Endothelial cell of umbilical vein (primary cell): ENCODE measurements at regions of chr3 and their contacts with region 1.

Region 1: DNA sequence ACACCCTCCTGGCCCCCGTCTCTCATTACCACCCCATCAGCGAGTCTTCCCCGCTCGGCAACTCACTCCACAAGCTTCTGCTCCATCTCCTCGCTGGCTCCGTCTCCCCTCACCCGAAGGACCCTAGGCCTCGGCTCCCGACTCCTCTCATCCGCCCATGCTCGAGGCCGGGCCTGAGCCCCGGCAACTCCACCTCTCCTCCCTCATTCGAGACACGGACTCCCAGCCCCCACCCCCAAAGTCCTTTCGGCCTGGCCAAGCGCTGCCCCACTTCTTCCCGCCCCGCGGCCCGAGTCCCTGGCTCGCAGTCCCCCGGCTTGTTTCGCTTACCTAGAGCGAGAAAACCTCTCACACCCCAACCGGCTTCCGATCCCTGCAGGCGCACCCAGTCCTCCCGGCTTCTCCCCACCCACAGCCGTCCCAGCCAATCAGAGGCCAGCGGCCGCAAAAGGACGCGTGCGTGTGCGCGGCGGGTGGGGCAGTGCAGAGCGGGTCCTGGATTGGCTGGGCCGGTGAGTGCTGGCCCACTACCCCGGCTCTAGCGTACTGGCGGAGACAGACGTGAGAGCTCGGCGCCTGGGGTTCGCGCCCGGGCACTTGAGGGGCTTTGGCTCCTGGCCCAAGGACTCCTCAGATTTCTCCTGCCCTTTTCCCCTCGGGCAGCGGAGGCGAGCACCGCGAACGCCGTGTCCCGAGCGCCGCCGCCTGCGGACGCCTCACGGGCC is at the start of gene HIGD1A:
- DNase-seq: peak; percentile 96
- H3K4me3 ChIP-seq: peak within 1 kb of the TSS; percentile 11 to 77 (median 52)
- H3K27ac ChIP-seq: peak within 1 kb of the TSS; percentile 39
- H3K4me1 ChIP-seq: peaks cover 11% of the 10 kb centered on the region
- H3K27me3 ChIP-seq: peaks cover 2 to 10% of the 10 kb centered on the region in 2 experiments
- CTCF ChIP-seq: no peak
- POLR2A ChIP-seq: peak; percentile 67
- total RNA-seq, gene HIGD1A: 68.9 and 71.8 TPM in 2 replicates

Region 2: GRCh38 chr3:42728056-42728455 is 76.2 kb before region 1 on chr3:
- CTCF ChIA-PET with region 1: no interaction called
- POLR2A ChIA-PET with region 1: no interaction called
- dilution Hi-C with region 1: no loop called
- intact Hi-C with region 1: no loop called
- DNase-seq: no peak
- H3K4me3 ChIP-seq: no peak overlapping the region
- H3K27ac ChIP-seq: no peak overlapping the region
- H3K4me1 ChIP-seq: no peaks in the 10 kb centered on the region
- H3K27me3 ChIP-seq: peaks cover 8 to 9% of the 10 kb centered on the region in 2 experiments
- CTCF ChIP-seq: no peak
- POLR2A ChIP-seq: no peak

Region 3: DNA sequence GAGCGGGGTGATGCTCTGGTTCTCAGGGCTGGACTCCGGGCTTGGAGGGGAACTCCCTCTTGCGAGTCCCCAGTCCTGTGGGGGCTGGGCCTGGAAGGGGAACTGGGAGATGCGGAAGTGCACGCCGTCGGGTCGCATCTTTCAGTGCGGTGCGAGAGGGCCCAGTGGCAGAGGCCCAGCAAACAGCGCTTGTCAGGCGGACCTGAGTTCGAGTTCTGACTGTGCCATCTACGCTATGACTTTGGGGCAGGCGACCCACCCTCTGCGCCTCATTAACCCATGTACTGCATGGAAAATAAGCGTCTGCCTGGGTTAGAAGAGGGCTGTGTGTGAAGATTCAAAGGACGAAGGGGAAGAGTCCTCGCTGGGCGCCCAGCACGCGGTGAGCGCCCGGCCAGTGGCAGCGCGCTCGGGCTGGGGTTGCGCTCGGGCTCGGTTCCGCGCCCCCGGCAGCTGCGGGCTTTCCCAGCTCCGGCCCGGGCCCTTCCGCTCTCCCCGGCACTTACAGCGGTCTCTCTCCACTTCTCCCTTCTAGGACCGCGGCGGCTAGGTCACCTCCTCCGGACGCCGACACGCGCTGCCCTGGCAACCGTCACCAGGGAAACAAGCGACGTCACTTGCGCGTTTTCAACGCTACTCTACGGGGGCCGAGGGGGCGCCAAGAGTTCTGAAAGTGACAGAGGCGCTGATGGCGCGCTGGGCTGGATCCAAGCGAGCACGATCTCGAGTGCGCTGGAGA is 31.4 kb before region 1 on chr3 and contains the start of gene CCDC13:
- CTCF ChIA-PET with region 1: interaction called, 5 read pairs
- POLR2A ChIA-PET with region 1: no interaction called
- dilution Hi-C with region 1: no loop called
- intact Hi-C with region 1: loop called (anchors 2 kb)
- DNase-seq: peak; percentile 95
- H3K4me3 ChIP-seq: peak within 1 kb of the TSS; percentile 38 to 85 (median 51)
- H3K27ac ChIP-seq: peak within 1 kb of the TSS; percentile 28
- H3K4me1 ChIP-seq: peaks cover 3% of the 10 kb centered on the region
- H3K27me3 ChIP-seq: no peaks in the 10 kb centered on the region
- CTCF ChIP-seq: peak in 1 of 2 donors; percentile 3
- POLR2A ChIP-seq: no peak
- total RNA-seq, gene CCDC13: 0.82 and 1.2 TPM in 2 replicates